ENCODE measurements at regions of chr17 and their contacts with region 1.

Region 1: DNA sequence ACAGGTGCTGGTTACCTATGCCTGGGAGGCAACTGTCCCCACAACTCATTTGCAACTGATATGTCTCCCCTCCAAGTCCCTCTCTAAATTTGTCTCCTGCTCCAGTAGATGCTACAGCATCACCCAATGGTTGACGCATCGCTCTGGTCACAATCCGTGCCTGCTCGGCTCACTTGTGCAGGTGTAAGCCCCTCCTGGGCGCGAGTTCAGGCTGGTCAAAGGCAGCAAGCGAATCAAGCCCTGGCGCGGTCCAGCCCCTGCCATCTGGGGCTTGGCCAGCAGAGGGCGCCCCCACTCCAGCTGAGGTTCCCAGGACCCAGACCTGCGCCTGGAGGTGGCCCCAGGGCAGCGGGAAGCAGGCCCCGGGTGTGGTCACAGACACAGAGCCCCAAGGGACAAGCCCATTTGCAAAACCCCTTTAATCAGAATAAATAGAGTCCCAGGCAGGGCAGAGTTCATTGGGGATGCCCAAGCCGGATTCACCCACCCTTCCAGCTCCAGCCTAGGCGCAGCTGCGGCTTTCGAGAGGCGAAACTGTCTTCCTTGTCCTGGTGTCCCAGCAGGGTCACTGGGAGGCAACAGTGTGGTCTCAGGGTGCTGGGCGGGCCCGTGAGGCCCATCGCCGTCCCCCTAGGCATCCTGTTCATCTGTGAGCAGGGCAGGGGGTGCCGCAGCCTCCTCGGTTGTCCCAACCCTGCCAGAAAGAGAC is 15.9 kb downstream of the TMC6 start:
- DNase-seq: no peak
- H3K4me3 ChIP-seq: no peak overlapping the region
- H3K27ac ChIP-seq: no peak overlapping the region
- H3K27me3 ChIP-seq: peaks cover 9% of the 10 kb centered on the region
- CTCF ChIP-seq: peak; percentile 97

Region 2: DNA sequence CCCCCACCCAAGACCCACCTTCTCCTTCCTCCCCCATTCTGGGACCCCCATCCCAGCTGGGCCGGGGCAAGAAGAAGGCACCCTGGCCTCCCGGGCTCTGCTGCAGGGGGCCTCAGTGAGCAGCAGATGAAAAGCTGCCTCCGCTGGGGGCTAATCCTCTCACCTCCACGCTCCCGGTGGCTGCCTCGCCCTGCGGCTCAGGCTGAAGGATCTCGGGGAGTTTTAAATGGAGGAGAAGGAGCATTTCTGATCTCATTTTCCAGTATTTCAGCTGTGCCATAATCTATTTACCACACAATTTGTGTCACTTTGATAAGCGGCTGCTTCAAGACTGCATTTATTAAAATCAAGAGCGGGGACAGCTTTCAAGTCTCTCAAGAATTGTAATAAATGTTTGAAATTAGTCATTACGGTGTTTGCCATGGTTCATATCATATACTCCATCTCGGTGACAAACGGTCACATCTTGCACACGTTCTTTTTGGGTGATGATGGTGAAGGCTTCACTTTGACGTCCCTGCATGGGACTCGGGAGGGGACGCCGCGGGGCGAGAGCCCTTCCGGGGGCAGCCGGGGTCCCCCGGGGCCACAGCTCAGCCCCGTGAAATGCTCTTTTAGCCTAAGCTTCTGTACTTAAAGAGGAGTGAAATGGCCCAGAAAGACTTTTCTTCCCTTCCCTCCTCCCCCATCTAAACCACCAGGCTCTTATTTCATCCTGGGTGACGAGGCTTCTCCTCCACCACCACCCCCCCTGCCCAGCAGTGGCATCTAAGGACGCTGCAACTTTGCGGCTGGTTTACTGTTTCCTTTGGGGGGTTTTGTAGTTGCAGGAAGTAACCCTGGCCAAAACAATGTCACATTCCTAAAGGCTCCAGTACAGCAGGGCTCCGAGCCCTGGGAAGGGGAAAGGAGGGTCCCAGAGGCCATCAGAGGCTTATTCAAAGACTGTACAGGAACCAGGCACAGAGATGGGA is 467.3 kb before region 1 on chr17:
- CTCF ChIA-PET with region 1: no interaction called
- POLR2A ChIA-PET with region 1: no interaction called
- DNase-seq: no peak
- H3K4me3 ChIP-seq: no peak overlapping the region
- H3K27ac ChIP-seq: no peak overlapping the region
- H3K27me3 ChIP-seq: peaks cover 15% of the 10 kb centered on the region
- CTCF ChIP-seq: no peak

Region 3: DNA sequence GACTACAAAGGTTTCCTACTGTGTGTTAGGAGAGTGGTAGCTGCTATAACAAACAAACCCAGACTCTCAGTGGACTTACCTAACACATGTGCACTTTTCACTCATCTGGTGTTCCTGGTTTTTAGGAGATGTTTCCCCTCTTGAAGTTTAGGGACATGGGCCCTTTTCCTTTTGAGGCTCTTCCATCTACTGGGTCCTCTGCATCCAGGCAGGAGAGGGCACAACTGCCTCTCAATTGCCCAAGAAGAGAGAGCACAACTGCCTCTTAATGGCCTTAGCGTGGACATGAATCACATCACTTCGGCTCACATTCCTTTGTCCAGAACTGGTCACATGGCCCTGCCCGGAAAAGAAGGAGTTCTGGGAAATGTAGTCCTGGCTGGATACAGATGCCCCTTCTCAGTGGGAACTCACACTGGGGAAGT is 164.0 kb before region 1 on chr17:
- CTCF ChIA-PET with region 1: no interaction called
- POLR2A ChIA-PET with region 1: no interaction called
- DNase-seq: peak; percentile 10
- H3K4me3 ChIP-seq: no peak overlapping the region
- H3K27ac ChIP-seq: no peak overlapping the region
- H3K27me3 ChIP-seq: peaks cover 26% of the 10 kb centered on the region
- CTCF ChIP-seq: no peak

Region 4: GRCh38 chr17:78101112-78101511 is 11.6 kb before region 1 on chr17:
- CTCF ChIA-PET with region 1: no interaction called
- POLR2A ChIA-PET with region 1: no interaction called
- DNase-seq: no peak
- H3K4me3 ChIP-seq: no peak overlapping the region
- H3K27ac ChIP-seq: no peak overlapping the region
- H3K27me3 ChIP-seq: no peaks in the 10 kb centered on the region
- CTCF ChIP-seq: no peak

Region 5: DNA sequence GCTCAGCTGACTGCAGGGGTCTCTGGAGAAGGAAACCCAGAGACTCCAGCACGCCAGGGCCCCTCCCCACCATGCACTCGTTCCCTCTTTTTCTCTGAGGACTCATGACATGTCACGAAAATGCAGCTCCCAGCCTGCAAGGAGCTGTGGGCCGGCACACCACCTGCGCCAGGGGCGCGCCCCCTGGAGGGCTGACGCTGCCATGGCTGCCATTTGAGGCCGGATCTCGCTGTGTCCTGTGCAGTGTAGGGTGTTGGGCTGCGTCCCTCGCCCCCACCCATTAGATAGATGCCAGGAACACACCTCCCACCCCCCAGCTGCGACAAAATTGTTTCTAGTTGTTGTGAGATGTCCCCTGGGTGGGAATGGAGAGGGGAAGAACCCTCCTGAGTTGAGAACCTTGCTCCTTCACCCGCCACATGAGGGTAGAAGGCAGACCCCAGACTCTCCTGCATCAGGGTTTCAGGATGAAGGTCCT is 63.9 kb after region 1 on chr17:
- CTCF ChIA-PET with region 1: interaction called, 13 read pairs
- POLR2A ChIA-PET with region 1: no interaction called
- DNase-seq: no peak
- H3K4me3 ChIP-seq: no peak overlapping the region
- H3K27ac ChIP-seq: no peak overlapping the region
- H3K27me3 ChIP-seq: no peaks in the 10 kb centered on the region
- CTCF ChIP-seq: peak; percentile 95

Region 6: GRCh38 chr17:78250891-78251794 is 138.5 kb after region 1 on chr17:
- CTCF ChIA-PET with region 1: interaction called, 13 read pairs
- POLR2A ChIA-PET with region 1: no interaction called
- DNase-seq: peak; percentile 54
- H3K4me3 ChIP-seq: no peak overlapping the region
- H3K27ac ChIP-seq: no peak overlapping the region
- H3K27me3 ChIP-seq: peaks cover 2% of the 10 kb centered on the region
- CTCF ChIP-seq: peak; percentile 99